ENCODE measurements at regions of chr2 and their contacts with region 1.

Region 1: DNA sequence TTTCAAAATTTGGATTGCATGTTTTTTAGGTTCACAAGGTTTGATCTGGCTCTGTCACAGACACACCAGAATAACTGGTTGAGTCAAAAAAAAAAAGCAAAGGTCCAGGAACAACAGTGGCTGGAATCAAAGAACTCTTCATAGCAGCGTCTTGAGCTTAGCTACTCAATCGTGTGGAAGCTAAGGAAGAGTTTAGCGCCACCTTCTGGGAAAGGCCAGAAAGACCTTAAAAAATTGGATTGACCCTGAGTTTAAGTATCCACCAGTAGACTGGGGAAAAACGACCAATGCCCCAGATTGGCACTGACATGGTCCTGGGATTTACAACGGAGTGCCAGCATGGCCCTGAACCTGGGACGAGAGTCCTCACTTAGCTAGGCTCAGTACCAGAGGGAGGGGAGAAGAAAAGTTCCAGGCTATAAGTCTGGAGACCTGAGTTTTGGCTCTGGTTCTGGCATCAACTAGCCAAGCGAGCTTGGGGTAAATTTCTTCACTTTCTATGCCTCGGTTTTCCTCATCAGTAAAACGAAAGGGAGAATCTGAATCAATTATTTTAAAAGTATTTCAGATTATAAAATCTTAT is 71.1 kb upstream of the TFCP2L1 start:
- DNase-seq: peak; percentile 28 to 47 (median 47)
- H3K4me3 ChIP-seq: no peak overlapping the region
- H3K4me3 Mint-ChIP-seq: no peak overlapping the region
- H3K27ac ChIP-seq: no peak overlapping the region
- H3K27ac Mint-ChIP-seq: no peak overlapping the region
- H3K4me1 ChIP-seq: no peaks in the 10 kb centered on the region
- H3K4me1 Mint-ChIP-seq: no peaks in the 10 kb centered on the region
- H3K27me3 ChIP-seq: no peaks in the 10 kb centered on the region
- H3K27me3 Mint-ChIP-seq: peaks cover 0 to 2% (median 0%) of the 10 kb centered on the region in 3 donors
- CTCF ChIP-seq: peak; percentile 76

Region 2: DNA sequence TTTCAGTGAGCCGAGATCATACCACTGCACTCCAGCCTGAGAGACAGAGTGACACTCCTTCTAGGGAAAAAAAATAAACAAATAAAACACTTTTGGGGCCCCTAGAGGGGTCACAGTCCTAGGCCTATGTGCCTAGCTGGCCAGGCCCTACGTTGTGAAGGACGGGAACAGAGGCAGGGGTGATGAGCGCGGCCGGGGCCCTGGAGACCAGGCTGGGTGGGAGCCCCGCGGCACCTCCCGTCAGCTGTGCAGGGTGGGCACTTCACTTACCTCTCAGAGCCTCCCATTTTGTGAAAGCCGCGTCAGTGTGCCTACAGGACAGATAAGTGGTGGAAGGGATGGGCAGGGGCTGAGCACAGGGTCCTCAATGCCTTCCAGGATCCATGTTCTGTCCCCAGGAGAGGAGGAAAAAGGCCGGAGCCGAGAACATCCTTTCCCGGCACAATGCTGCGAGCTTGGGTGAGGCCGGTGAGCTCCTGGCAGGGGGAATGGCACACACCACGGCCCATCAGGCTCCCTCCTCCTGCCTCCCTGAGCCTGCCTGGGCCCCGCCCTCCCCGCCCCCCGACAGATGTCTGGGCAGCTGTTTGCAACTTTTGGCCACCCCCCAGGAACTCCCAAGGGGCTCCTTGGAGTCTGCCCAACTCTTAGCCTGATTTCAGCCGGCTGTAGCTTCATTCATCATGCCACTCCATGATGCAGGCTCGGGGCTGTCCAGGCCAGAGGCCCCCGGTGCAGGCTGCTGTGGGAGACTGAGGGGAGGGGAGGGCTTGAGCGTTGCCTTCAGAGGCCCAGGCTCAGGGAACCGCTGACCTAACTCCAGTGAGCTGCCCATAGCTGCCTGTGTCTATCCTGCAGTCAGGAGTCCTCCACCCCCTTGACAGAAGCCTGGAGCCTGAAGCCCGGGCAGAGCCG is 267.6 kb before region 1 on chr2:
- intact Hi-C with region 1: loop called (anchors 5 kb)
- DNase-seq: no peak
- H3K4me3 ChIP-seq: no peak overlapping the region
- H3K4me3 Mint-ChIP-seq: no peak overlapping the region
- H3K27ac ChIP-seq: no peak overlapping the region
- H3K27ac Mint-ChIP-seq: no peak overlapping the region
- H3K4me1 ChIP-seq: no peaks in the 10 kb centered on the region
- H3K4me1 Mint-ChIP-seq: no peaks in the 10 kb centered on the region
- H3K27me3 ChIP-seq: no peaks in the 10 kb centered on the region
- H3K27me3 Mint-ChIP-seq: peaks cover 2 to 7% (median 5%) of the 10 kb centered on the region in 3 donors
- CTCF ChIP-seq: no peak

Region 3: DNA sequence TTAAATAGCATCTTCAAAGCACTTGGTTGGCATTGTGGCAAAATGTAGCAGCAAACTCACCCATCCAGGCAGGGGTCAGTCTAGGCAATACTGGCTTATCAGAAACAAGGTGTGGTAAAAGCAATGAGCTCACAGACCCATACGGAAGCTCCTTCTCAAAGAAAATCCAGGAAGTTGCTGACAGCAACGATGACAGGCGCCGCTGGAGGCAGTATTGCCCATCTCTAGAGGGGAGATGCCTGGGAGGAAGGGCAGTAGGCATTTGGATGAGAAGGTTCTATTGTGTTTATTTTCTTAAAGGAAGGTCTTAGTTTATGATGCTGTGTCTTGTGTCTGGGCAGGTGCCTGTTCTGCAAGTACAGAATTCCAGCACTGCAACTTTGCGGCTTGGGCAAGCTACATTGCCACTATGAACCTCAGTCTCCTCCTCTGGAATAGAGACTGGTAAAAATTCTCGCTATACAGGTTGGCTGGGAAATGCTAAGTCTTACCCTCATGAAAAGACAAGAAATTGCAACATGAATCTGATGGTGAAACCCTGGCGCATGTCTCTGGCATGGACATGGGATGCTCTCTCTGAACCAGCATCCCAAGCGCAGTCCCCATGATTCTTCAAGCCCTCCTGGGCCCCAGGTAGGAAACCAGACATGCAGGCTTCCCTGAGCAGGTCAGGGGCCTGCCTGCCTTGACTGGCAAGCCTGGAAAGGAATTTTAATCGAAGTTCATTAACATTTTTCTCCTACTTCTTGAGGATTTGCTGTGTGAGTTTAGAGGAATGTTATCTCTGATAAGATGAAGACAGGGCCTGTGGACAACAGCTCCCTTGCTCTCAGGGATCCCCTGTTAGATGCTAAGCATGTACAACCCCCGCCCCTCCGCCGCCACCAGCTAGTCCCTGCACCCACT is 227.1 kb before region 1 on chr2:
- intact Hi-C with region 1: loop called (anchors 2 to 10 kb)
- DNase-seq: peak; percentile 44 to 59 (median 56)
- H3K4me3 ChIP-seq: no peak overlapping the region
- H3K4me3 Mint-ChIP-seq: no peak overlapping the region
- H3K27ac ChIP-seq: no peak overlapping the region
- H3K27ac Mint-ChIP-seq: peak overlapping the region in 1 of 7 donors; percentile 13
- H3K4me1 ChIP-seq: no peaks in the 10 kb centered on the region
- H3K4me1 Mint-ChIP-seq: no peaks in the 10 kb centered on the region
- H3K27me3 ChIP-seq: no peaks in the 10 kb centered on the region
- H3K27me3 Mint-ChIP-seq: peaks cover 5 to 8% (median 5%) of the 10 kb centered on the region in 3 donors
- CTCF ChIP-seq: peak; percentile 78

Region 4: GRCh38 chr2:121387591-121388325 is 31.6 kb after region 1 on chr2:
- intact Hi-C with region 1: no loop called
- DNase-seq: no peak
- H3K4me3 ChIP-seq: no peak overlapping the region
- H3K4me3 Mint-ChIP-seq: no peak overlapping the region
- H3K27ac ChIP-seq: no peak overlapping the region
- H3K27ac Mint-ChIP-seq: no peak overlapping the region
- H3K4me1 ChIP-seq: no peaks in the 10 kb centered on the region
- H3K4me1 Mint-ChIP-seq: no peaks in the 10 kb centered on the region
- H3K27me3 ChIP-seq: no peaks in the 10 kb centered on the region
- H3K27me3 Mint-ChIP-seq: no peaks in the 10 kb centered on the region
- CTCF ChIP-seq: no peak

Region 5: GRCh38 chr2:121649596-121650314 is 293.6 kb after region 1 on chr2:
- intact Hi-C with region 1: no loop called
- DNase-seq: peak; percentile 97 to 98 (median 97)
- H3K4me3 ChIP-seq: peak overlapping the region; percentile 78 to 95 (median 87)
- H3K4me3 Mint-ChIP-seq: peak overlapping the region; percentile 90 to 93
- H3K27ac ChIP-seq: peak overlapping the region; percentile 93 to 100
- H3K27ac Mint-ChIP-seq: peak overlapping the region; percentile 97 to 99 (median 99)
- H3K4me1 ChIP-seq: peaks cover 23 to 35% of the 10 kb centered on the region in 2 donors
- H3K4me1 Mint-ChIP-seq: peaks cover 54% of the 10 kb centered on the region
- H3K27me3 ChIP-seq: no peaks in the 10 kb centered on the region
- H3K27me3 Mint-ChIP-seq: peaks cover 0 to 1% (median 0%) of the 10 kb centered on the region in 3 donors
- CTCF ChIP-seq: no peak

Measured in CD14-positive monocyte (primary cell).